ENCODE measurements at regions of chr13 and their contacts with region 1.

Region 1: GRCh38 chr13:36999054-36999714 is at the start of gene ALG5:
- DNase-seq: peak; percentile 87 to 98 (median 92)
- ATAC-seq: peak; percentile 62
- H3K4me3 ChIP-seq: peak within 1 kb of the TSS; percentile 95
- H3K4me3 Mint-ChIP-seq: peak within 1 kb of the TSS; percentile 96
- H3K27ac ChIP-seq: peak within 1 kb of the TSS; percentile 98 to 99
- H3K27ac Mint-ChIP-seq: peak within 1 kb of the TSS; percentile 99
- H3K4me1 ChIP-seq: peaks cover 12% of the 10 kb centered on the region
- H3K4me1 Mint-ChIP-seq: peaks cover 47% of the 10 kb centered on the region
- H3K27me3 ChIP-seq: no peaks in the 10 kb centered on the region
- H3K27me3 Mint-ChIP-seq: peaks cover 5% of the 10 kb centered on the region
- CTCF ChIP-seq: peak; percentile 97
- total RNA-seq, gene ALG5: 14.4 to 15.1 TPM

Region 2: DNA sequence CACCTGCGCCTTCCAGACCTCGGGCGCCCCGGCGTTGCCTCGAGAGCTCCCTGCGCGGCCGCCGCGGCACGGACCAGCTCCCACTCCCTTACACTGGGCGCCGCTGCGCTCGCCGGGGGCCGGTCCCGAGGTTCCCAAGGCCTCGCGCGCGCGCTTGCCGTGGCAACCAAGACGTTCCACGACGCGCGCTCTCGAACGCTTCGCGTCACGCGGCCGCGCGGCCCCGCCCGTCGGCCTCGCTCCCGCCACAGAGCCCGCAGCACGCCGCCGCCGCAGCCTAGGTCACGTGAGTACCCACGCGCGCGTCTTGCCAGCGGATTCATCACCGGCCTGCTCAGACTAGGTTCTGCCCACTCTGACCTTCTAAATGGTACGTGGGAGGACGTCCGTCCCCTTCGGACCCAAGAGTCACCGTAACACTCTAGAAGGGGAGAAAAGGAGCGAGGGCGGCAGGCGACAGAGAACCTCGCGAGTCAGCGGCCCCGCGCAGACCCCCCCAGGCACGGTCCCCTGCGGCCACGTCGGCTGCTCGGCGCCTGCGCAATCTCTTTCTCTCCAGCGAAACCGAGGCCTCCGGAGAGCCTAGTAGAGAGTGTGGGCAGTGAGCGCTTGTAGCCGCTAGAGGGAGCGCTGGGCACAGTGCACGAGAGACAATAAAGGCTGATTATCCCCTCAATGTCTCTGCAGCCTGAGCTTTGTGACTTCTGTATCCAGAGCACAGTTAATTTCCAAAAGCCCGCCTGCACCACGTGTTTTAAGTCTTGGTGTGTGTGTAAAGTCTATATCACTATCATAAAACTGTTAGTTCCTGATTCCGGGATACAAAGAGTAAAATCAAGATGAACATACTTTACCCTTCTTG is 652.7 kb before region 1 on chr13 and contains the start of gene SPART:
- CTCF ChIA-PET with region 1: no interaction called
- POLR2A ChIA-PET with region 1: interaction called, 12 read pairs
- intact Hi-C with region 1: loop called (anchors 5 to 10 kb)
- DNase-seq: peak; percentile 78 to 95 (median 85)
- ATAC-seq: peak; percentile 85
- H3K4me3 ChIP-seq: peak within 1 kb of the TSS; percentile 84
- H3K4me3 Mint-ChIP-seq: peak within 1 kb of the TSS; percentile 99
- H3K27ac ChIP-seq: peak within 1 kb of the TSS; percentile 77 to 96
- H3K27ac Mint-ChIP-seq: peak within 1 kb of the TSS; percentile 100
- H3K4me1 ChIP-seq: peaks cover 20% of the 10 kb centered on the region
- H3K4me1 Mint-ChIP-seq: peaks cover 43% of the 10 kb centered on the region
- H3K27me3 ChIP-seq: no peaks in the 10 kb centered on the region
- H3K27me3 Mint-ChIP-seq: peaks cover 18% of the 10 kb centered on the region
- CTCF ChIP-seq: peak; percentile 91
- total RNA-seq, gene SPART: 22.0 to 22.9 TPM

Region 3: DNA sequence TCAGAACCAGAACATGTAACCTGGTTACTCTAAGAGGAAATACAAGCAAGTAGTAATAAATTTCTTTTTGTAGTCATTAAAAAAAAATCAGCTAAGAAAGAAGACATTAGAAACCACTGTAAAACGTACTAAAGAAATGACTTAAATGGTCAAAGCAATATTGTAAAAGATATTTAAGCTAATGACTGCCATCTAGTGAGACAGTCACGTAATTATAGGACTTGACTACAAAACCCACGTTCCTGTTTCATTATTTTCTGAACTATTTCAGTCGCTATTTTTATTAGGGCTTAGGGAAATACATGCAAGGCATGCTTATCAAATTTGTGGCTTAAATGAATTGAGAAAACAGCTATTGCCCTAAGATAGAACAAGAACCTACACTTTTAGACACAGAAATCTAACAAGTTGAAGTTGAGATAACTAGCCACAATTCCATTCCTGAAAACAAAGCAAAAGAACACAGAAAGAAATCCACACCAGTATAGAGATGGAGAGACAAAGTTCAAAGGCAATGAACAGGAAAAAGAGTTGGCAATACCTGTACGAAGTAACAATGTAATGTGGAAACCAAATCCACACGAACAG is 17.9 kb before region 1 on chr13:
- CTCF ChIA-PET with region 1: interaction called, 4 read pairs
- POLR2A ChIA-PET with region 1: interaction called, 10 read pairs
- intact Hi-C with region 1: no loop called
- DNase-seq: peak in 3 of 14 experiments; percentile 23 to 30 (median 29)
- ATAC-seq: no peak
- H3K4me3 ChIP-seq: no peak overlapping the region
- H3K4me3 Mint-ChIP-seq: no peak overlapping the region
- H3K27ac ChIP-seq: no peak overlapping the region
- H3K27ac Mint-ChIP-seq: no peak overlapping the region
- H3K4me1 ChIP-seq: no peaks in the 10 kb centered on the region
- H3K4me1 Mint-ChIP-seq: no peaks in the 10 kb centered on the region
- H3K27me3 ChIP-seq: no peaks in the 10 kb centered on the region
- H3K27me3 Mint-ChIP-seq: no peaks in the 10 kb centered on the region
- CTCF ChIP-seq: peak; percentile 25

Region 4: DNA sequence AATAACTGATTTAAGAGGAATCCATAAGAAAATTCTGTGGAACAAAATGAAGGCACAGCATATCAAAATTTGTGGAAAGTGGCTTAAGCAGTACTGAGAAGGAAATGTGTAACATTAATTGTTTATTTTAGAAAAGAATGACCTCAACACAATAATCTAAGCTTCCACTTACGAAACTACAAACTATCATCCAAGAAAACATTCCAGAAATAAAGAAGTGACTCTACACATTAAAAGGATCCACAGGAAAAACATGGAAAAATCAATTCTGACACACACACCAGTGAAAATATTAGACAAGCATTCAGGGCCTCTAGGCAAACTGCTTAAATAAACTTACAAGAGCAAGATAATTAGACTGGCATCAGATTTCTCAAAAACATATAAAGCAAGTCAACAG is 15.4 kb after region 1 on chr13:
- CTCF ChIA-PET with region 1: interaction called, 10 read pairs
- POLR2A ChIA-PET with region 1: interaction called, 22 read pairs
- intact Hi-C with region 1: no loop called
- DNase-seq: no peak
- ATAC-seq: no peak
- H3K4me3 ChIP-seq: no peak overlapping the region
- H3K4me3 Mint-ChIP-seq: no peak overlapping the region
- H3K27ac ChIP-seq: no peak overlapping the region
- H3K27ac Mint-ChIP-seq: peak overlapping the region; percentile 38
- H3K4me1 ChIP-seq: no peaks in the 10 kb centered on the region
- H3K4me1 Mint-ChIP-seq: peaks cover 6% of the 10 kb centered on the region
- H3K27me3 ChIP-seq: no peaks in the 10 kb centered on the region
- H3K27me3 Mint-ChIP-seq: no peaks in the 10 kb centered on the region
- CTCF ChIP-seq: no peak

Region 5: GRCh38 chr13:37058910-37059847 is 60.0 kb after region 1 on chr13 and contains the start of gene SUPT20H:
- CTCF ChIA-PET with region 1: interaction called, 8 read pairs
- POLR2A ChIA-PET with region 1: interaction called, 51 read pairs
- intact Hi-C with region 1: loop called (anchors 2 kb)
- DNase-seq: peak; percentile 89 to 96 (median 94)
- ATAC-seq: peak; percentile 91
- H3K4me3 ChIP-seq: peak within 1 kb of the TSS; percentile 96
- H3K4me3 Mint-ChIP-seq: peak within 1 kb of the TSS; percentile 95
- H3K27ac ChIP-seq: peak within 1 kb of the TSS; percentile 93
- H3K27ac Mint-ChIP-seq: peak within 1 kb of the TSS; percentile 99
- H3K4me1 ChIP-seq: peaks cover 16% of the 10 kb centered on the region
- H3K4me1 Mint-ChIP-seq: peaks cover 43% of the 10 kb centered on the region
- H3K27me3 ChIP-seq: no peaks in the 10 kb centered on the region
- H3K27me3 Mint-ChIP-seq: no peaks in the 10 kb centered on the region
- CTCF ChIP-seq: no peak
- total RNA-seq, gene SUPT20H: 61.7 to 63.1 TPM

Measured in CD4-positive, alpha-beta T cell (primary cell).